Kidney (tissue), 22 donors: ENCODE measurements at regions of chr10 and their contacts with region 1.

Region 1: GRCh38 chr10:33008499-33009243 is 50.6 kb upstream of the ITGB1 start:
- DNase-seq: peak in 4 of 5 donors; percentile 55 to 89 (median 72)
- H3K4me3 ChIP-seq: no peak overlapping the region
- H3K27ac ChIP-seq: no peak overlapping the region
- H3K4me1 ChIP-seq: peaks cover 0 to 3% (median 0%) of the 10 kb centered on the region in 3 donors
- H3K27me3 ChIP-seq: no peaks in the 10 kb centered on the region
- CTCF ChIP-seq: peak; percentile 99

Region 2: DNA sequence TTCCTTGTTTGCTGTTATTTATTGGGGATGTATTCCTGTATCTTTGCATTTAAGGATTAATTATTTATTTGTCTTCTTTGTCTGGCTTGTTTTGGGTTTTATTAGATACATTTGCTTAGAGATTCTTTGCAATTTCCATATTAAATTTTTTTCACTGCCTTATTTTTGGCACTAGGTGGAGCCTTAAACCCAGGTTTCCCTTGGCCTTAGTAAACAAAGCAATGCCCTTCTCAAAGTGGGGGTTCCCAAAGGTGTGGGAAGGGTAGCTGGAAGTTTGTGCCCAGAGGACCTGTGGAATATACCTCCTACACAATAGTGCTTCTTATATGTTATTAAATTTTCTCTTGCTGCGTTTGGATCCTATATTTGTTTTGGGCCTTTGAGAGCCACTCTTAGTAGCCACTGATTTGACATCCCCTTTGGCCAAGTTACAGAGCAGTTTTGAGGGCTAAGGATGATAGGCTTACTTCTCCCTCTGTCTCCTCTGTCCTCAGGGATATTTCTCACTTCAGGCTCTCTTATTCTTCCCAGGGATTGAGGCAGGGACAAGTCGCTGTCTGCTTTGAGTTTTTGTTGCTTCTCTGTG is 213.0 kb before region 1 on chr10:
- intact Hi-C with region 1: loop called (anchors 5 kb)
- DNase-seq: peak in 2 of 5 donors; percentile 24 to 50
- H3K4me3 ChIP-seq: no peak overlapping the region
- H3K27ac ChIP-seq: no peak overlapping the region
- H3K4me1 ChIP-seq: no peaks in the 10 kb centered on the region
- H3K27me3 ChIP-seq: no peaks in the 10 kb centered on the region
- CTCF ChIP-seq: peak; percentile 68